Posterior cingulate gyrus (tissue), 11 donors: ENCODE measurements at regions of chr5 and their contacts with region 1.

Region 1: DNA sequence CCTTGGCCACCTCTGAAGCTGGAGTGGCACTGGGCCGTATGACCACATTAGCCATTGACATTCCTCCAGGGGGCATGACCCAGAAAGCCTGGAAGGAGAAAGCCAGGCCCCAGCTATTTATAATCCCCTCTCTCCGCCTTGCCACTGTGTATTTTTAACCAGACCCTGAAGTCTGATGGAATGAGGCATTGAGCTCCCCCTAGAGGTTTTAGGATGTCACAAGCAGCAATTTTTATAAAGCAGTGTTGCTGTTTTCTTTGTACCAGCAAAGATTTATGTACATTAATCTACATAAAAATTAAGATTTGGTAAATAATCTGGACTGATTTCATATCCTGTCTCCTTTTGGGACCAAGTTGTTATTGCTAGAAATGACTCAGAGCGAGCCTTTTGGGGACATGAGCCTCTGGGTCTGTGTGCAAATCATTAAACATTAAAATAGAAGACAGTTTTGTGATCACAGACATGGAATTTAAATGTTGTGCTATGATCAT is 127.1 kb downstream of the TRIO start:
- DNase-seq: no peak

Region 2: GRCh38 chr5:13987843-13988464 is 282.3 kb before region 1 on chr5:
- intact Hi-C with region 1: loop called (anchors 5 kb)
- DNase-seq: peak in 6 of 10 donors; percentile 26 to 87 (median 46)

Region 3: GRCh38 chr5:14108170-14108996 is 161.9 kb before region 1 on chr5:
- intact Hi-C with region 1: loop called (anchors 1 kb)
- DNase-seq: peak in 5 of 10 donors; percentile 18 to 73 (median 36)

Region 4: GRCh38 chr5:14151416-14151815 is 118.8 kb before region 1 on chr5:
- intact Hi-C with region 1: no loop called
- DNase-seq: no peak

Region 5: GRCh38 chr5:14628346-14628745 is 358.1 kb after region 1 on chr5:
- intact Hi-C with region 1: no loop called
- DNase-seq: no peak